CD4-positive, alpha-beta T cell (primary cell): ENCODE measurements at regions of chr20 and their contacts with region 1.

Region 1: DNA sequence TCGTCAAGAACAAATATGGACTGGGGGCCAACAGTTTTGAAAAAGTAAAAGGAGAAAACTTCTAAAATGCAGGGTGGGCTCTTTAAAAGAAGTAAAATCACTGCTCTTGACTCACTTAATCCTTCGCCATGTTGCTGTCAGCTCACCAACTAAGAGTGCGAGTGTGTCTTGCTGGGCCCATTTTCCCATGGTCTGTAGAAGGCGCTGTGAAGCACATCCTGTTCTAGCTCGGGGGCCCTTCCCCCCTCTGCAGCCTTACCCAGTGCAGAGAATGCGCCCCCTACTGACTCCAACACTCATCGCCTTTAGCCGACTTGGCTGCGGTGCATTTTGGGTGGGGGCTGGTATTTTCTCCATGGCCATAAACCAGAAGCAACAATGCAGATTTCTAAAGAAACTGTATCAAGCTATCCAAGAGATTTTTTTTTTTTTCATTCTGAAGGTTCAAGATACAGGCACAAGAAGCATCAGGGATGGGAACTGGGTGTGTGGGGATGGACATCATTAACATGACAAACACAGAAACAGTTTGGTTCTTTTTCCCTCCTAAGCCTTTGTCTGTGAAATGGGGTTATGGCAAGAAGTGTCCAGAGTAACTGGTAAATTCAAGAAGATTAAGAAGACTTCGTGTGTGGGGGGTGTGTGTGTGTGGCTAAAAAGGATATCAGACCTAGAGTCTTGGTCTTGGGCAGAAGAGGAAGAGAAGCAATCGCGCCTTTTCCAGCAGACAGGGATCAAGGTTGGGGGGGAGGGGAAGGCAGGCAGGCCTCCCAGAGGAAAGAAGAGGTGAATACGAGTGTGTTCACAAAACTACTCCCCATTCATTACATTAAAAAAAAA is 1.7 kb downstream of the ADNP start:
- DNase-seq: peak; percentile 76 to 97 (median 90)
- ATAC-seq: peak; percentile 76
- H3K4me3 ChIP-seq: peak overlapping the region; percentile 66
- H3K4me3 Mint-ChIP-seq: peak overlapping the region; percentile 93
- H3K27ac ChIP-seq: peak overlapping the region; percentile 2 to 37
- H3K27ac Mint-ChIP-seq: peak overlapping the region; percentile 98
- H3K4me1 ChIP-seq: peaks cover 37% of the 10 kb centered on the region
- H3K4me1 Mint-ChIP-seq: peaks cover 69% of the 10 kb centered on the region
- H3K27me3 ChIP-seq: no peaks in the 10 kb centered on the region
- H3K27me3 Mint-ChIP-seq: no peaks in the 10 kb centered on the region
- CTCF ChIP-seq: peak; percentile 90

Region 2: DNA sequence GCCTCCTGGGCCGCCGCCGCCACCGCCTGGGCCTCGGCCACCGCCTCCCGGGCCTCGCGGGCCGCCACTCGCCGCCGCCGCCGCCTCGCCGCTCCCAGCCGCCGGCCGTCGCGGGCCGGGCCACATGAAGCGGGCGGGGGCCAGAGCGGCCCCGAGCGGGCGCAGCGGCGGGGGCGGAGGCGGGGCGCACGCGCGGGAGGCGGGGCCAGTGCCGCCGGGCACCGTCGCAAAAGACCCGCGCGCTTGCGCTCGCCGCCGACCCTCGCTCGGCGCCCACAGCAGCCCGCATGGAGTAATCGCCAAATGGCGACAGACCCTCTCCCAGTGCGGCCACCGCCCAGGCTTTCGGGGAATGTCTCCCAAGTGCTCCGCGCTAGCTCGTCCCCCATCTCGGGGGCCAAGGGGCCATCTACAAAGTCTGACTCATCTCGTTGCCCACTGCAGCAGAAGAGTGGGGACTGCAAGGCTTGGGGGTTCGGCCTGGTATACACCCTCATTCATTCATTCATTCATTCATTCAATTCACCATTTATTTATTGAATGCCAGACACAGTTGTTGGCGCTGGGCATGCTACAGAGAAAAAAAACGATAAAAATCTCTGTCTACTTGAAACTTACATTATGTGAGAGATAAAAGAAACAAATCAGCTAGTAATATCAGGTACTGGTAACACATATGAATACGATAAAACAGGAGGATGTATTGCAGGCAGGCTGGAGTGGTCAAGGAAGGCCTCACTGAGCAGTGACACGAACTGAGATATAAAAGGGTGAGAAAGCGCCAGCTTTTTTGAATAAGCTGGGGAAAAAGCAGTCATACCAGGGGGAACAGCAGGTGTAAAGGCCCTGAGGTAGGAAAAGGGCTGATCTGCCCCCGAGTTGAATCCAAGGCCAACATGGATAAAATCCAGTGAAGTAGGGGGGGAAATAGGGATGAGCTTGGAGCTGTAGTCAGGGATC is 1215.5 kb before region 1 on chr20 and contains the start of gene B4GALT5:
- CTCF ChIA-PET with region 1: no interaction called
- POLR2A ChIA-PET with region 1: no interaction called
- intact Hi-C with region 1: loop called in 1 of 2 experiments (anchors 10 kb)
- DNase-seq: peak; percentile 17 to 84 (median 50)
- ATAC-seq: peak; percentile 79
- H3K4me3 ChIP-seq: peak within 1 kb of the TSS; percentile 89
- H3K4me3 Mint-ChIP-seq: peak within 1 kb of the TSS; percentile 93
- H3K27ac ChIP-seq: peak within 1 kb of the TSS in 1 of 2 donors; percentile 40
- H3K27ac Mint-ChIP-seq: peak within 1 kb of the TSS; percentile 63
- H3K4me1 ChIP-seq: peaks cover 17% of the 10 kb centered on the region
- H3K4me1 Mint-ChIP-seq: peaks cover 35% of the 10 kb centered on the region
- H3K27me3 ChIP-seq: no peaks in the 10 kb centered on the region
- H3K27me3 Mint-ChIP-seq: no peaks in the 10 kb centered on the region
- CTCF ChIP-seq: no peak
- total RNA-seq, gene B4GALT5: 3.1 to 3.2 TPM

Region 3: GRCh38 chr20:50189681-50190582 is 739.6 kb before region 1 on chr20:
- CTCF ChIA-PET with region 1: no interaction called
- POLR2A ChIA-PET with region 1: no interaction called
- intact Hi-C with region 1: loop called in 1 of 2 experiments (anchors 10 kb)
- DNase-seq: peak; percentile 73 to 91 (median 80)
- ATAC-seq: peak; percentile 54
- H3K4me3 ChIP-seq: peak overlapping the region; percentile 75
- H3K4me3 Mint-ChIP-seq: peak overlapping the region; percentile 76
- H3K27ac ChIP-seq: no peak overlapping the region
- H3K27ac Mint-ChIP-seq: peak overlapping the region; percentile 42
- H3K4me1 ChIP-seq: peaks cover 38% of the 10 kb centered on the region
- H3K4me1 Mint-ChIP-seq: peaks cover 21% of the 10 kb centered on the region
- H3K27me3 ChIP-seq: peaks cover 0 to 5% of the 10 kb centered on the region in 2 experiments
- H3K27me3 Mint-ChIP-seq: peaks cover 10% of the 10 kb centered on the region
- CTCF ChIP-seq: peak; percentile 61

Region 4: GRCh38 chr20:50680412-50680908 is 249.1 kb before region 1 on chr20:
- CTCF ChIA-PET with region 1: no interaction called
- POLR2A ChIA-PET with region 1: no interaction called
- intact Hi-C with region 1: no loop called
- DNase-seq: no peak
- ATAC-seq: no peak
- H3K4me3 ChIP-seq: no peak overlapping the region
- H3K4me3 Mint-ChIP-seq: no peak overlapping the region
- H3K27ac ChIP-seq: no peak overlapping the region
- H3K27ac Mint-ChIP-seq: no peak overlapping the region
- H3K4me1 ChIP-seq: no peaks in the 10 kb centered on the region
- H3K4me1 Mint-ChIP-seq: no peaks in the 10 kb centered on the region
- H3K27me3 ChIP-seq: no peaks in the 10 kb centered on the region
- H3K27me3 Mint-ChIP-seq: peaks cover 5% of the 10 kb centered on the region
- CTCF ChIP-seq: no peak

Region 5: DNA sequence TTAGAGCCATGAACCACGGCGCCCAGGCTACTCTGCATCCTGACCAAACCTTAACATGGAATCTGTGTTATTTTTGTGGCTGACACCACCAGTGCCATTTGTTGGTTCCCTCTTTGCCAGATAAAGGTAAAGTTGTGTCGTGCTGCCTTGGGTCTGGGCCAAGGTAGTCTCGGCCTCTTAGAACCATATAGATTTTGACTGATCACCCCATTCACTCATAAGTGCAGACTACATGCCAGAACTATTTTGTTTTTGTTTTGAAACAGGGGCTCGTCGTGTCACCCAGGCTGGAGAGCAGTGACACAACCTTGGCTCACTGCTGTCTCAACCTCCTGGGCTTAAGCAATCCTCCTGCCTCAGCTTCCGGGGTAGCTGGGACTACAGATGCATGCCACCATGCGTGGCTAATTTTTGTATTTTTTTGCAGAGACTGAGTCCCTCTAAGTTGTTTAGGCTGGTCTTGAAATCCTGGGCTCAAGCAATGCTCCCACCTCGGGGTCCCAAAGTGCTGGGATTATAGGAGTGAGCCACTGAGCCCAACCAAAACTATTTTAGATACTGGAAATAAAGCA is 218.9 kb before region 1 on chr20:
- CTCF ChIA-PET with region 1: no interaction called
- POLR2A ChIA-PET with region 1: no interaction called
- intact Hi-C with region 1: no loop called
- DNase-seq: no peak
- ATAC-seq: no peak
- H3K4me3 ChIP-seq: no peak overlapping the region
- H3K4me3 Mint-ChIP-seq: no peak overlapping the region
- H3K27ac ChIP-seq: no peak overlapping the region
- H3K27ac Mint-ChIP-seq: no peak overlapping the region
- H3K4me1 ChIP-seq: no peaks in the 10 kb centered on the region
- H3K4me1 Mint-ChIP-seq: no peaks in the 10 kb centered on the region
- H3K27me3 ChIP-seq: peaks cover 0 to 7% of the 10 kb centered on the region in 2 experiments
- H3K27me3 Mint-ChIP-seq: peaks cover 25% of the 10 kb centered on the region
- CTCF ChIP-seq: no peak

Region 6: GRCh38 chr20:50815162-50815989 is 114.1 kb before region 1 on chr20:
- CTCF ChIA-PET with region 1: interaction called, 16 read pairs
- POLR2A ChIA-PET with region 1: interaction called, 20 read pairs
- intact Hi-C with region 1: loop called in 1 of 2 experiments (anchors 1 kb)
- DNase-seq: peak in 2 of 14 experiments; percentile 9 to 30
- ATAC-seq: peak; percentile 15
- H3K4me3 ChIP-seq: peak overlapping the region; percentile 7
- H3K4me3 Mint-ChIP-seq: peak overlapping the region; percentile 66
- H3K27ac ChIP-seq: no peak overlapping the region
- H3K27ac Mint-ChIP-seq: peak overlapping the region; percentile 87
- H3K4me1 ChIP-seq: peaks cover 34% of the 10 kb centered on the region
- H3K4me1 Mint-ChIP-seq: peaks cover 48% of the 10 kb centered on the region
- H3K27me3 ChIP-seq: no peaks in the 10 kb centered on the region
- H3K27me3 Mint-ChIP-seq: no peaks in the 10 kb centered on the region
- CTCF ChIP-seq: no peak

Region 7: DNA sequence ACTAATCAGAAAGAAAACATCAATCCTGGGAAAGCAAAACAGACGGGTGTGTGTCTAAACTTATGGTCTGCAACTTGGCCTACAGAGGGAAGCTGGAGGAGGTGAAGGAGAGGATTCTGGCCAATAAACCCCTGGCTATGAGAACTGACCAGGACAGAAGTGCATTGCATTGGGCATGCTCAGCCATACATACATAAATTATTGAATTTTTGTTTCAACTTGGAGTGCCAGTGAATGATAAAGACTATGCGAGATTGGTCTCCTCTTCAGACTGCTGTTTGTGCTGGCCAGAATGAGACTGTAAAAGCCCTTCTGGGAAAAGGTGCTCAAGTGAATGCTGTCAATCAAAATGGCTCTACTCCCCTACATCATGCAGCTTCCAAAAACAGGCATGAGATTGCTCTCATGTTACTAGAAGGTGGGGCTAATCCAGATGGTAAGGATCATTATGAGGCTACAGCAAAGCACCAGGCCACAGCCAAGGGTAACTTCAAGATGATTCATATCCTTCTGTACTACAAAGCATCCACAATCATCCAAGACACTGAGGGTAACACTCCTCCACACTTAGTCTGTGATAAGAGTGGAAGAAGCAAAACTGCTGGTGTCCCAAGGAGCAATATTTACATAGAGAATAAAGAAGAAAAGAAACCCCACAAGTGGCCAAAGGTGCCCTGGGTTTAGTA is 15.7 kb before region 1 on chr20:
- CTCF ChIA-PET with region 1: interaction called, 31 read pairs
- POLR2A ChIA-PET with region 1: interaction called, 18 read pairs
- intact Hi-C with region 1: loop called in 1 of 2 experiments (anchors 1 kb)
- DNase-seq: peak in 1 of 14 experiments; percentile 25
- ATAC-seq: peak; percentile 71
- H3K4me3 ChIP-seq: no peak overlapping the region
- H3K4me3 Mint-ChIP-seq: no peak overlapping the region
- H3K27ac ChIP-seq: no peak overlapping the region
- H3K27ac Mint-ChIP-seq: peak overlapping the region; percentile 57
- H3K4me1 ChIP-seq: peaks cover 33% of the 10 kb centered on the region
- H3K4me1 Mint-ChIP-seq: peaks cover 89% of the 10 kb centered on the region
- H3K27me3 ChIP-seq: no peaks in the 10 kb centered on the region
- H3K27me3 Mint-ChIP-seq: no peaks in the 10 kb centered on the region
- CTCF ChIP-seq: no peak

Region 8: DNA sequence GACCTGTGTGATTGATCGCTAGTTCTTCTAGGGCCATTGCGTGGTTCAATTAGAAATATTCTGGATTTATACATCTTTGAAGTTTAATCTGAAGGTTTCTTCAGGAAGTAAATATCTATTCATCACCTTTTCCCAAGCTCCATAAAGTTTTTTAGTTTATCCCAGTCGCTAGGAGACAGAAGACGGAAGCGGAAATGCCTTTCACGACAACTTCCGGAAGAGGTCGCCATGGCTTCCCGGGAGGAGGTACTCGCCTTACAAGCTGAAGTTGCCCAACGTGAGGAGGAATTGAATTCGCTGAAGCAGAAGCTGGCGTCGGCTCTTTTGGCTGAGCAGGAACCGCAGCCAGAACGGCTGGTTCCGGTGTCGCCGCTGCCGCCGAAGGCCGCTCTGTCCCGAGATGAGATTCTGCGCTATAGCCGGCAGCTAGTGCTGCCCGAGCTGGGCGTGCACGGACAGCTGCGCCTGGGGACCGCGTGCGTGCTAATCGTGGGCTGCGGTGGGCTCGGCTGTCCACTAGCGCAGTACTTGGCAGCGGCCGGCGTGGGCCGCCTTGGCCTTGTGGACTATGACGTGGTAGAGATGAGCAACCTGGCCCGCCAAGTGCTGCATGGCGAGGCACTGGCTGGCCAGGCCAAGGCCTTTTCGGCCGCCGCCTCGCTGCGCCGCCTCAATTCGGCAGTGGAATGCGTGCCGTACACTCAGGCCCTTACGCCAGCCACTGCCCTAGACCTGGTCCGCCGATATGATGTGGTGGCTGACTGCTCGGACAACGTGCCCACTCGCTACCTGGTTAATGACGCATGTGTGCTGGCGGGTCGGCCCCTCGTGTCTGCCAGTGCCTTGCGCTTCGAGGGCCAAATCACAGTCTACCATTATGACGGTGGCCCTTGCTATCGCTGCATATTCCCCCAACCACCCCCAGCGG is 29.4 kb after region 1 on chr20 and contains the start of gene MOCS3:
- CTCF ChIA-PET with region 1: interaction called, 63 read pairs
- POLR2A ChIA-PET with region 1: interaction called, 130 read pairs
- intact Hi-C with region 1: loop called (anchors 1 kb)
- DNase-seq: peak; percentile 70 to 96 (median 76)
- ATAC-seq: peak; percentile 81
- H3K4me3 ChIP-seq: peak within 1 kb of the TSS; percentile 94
- H3K4me3 Mint-ChIP-seq: peak within 1 kb of the TSS; percentile 94
- H3K27ac ChIP-seq: peak within 1 kb of the TSS; percentile 82 to 99
- H3K27ac Mint-ChIP-seq: peak within 1 kb of the TSS; percentile 96
- H3K4me1 ChIP-seq: peaks cover 34% of the 10 kb centered on the region
- H3K4me1 Mint-ChIP-seq: peaks cover 62% of the 10 kb centered on the region
- H3K27me3 ChIP-seq: no peaks in the 10 kb centered on the region
- H3K27me3 Mint-ChIP-seq: no peaks in the 10 kb centered on the region
- CTCF ChIP-seq: no peak
- total RNA-seq, gene MOCS3: 2.7 to 3.0 TPM